ENCODE measurements at regions of chr6 and their contacts with region 1.

Region 1: DNA sequence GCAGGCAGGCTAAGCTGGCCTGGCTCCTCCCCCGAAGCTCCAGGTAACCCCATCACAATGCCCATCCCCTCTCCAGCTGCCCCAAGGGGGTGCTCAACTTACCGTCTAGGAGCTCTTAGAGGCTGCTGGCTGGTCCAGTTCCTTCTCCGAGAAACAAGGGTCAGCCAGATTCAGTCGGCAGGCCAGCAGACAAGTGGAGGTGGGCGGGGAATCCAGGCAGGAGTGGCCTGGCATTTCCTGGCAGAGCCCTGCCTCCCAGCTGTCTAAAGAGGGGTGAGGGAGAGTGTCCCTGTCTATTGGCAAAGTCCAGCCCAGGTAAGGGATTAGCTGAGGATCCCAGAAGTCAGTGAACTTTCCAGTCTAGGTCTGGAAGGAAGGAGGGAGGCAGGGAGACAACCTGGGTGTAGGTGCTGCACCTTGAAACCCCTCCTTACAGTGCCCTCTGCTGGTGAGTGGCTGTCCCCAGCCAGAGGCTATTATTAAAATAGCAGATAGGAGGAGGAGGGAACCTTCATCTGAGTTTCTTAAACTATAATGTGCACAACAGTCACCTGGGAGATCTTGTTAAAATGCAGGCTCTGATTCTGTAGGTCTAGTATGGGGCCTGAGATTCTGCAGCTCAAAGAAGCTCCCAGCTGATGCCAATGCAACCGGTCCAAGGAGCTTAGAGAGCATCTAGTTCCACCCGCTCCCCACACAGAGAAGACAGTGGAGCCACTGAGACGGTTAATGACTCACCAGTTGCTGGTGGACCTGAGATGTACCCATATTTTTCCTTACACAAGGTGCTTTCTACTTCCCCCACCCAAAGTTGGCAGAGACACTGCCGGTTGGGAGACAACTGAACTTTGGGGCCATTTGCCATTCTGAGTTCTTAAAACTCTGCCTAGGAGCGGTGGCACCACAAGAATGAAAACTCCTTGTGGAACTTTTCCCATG is at the start of gene UNC5CL:
- DNase-seq: peak; percentile 91
- H3K4me3 Mint-ChIP-seq: peak within 1 kb of the TSS; percentile 73
- H3K27ac Mint-ChIP-seq: peak within 1 kb of the TSS; percentile 90
- H3K4me1 Mint-ChIP-seq: peaks cover 58% of the 10 kb centered on the region
- H3K27me3 Mint-ChIP-seq: no peaks in the 10 kb centered on the region
- CTCF ChIP-seq: peak; percentile 76
- total RNA-seq, gene UNC5CL: 10.6 and 15.9 TPM in 2 replicates

Region 2: DNA sequence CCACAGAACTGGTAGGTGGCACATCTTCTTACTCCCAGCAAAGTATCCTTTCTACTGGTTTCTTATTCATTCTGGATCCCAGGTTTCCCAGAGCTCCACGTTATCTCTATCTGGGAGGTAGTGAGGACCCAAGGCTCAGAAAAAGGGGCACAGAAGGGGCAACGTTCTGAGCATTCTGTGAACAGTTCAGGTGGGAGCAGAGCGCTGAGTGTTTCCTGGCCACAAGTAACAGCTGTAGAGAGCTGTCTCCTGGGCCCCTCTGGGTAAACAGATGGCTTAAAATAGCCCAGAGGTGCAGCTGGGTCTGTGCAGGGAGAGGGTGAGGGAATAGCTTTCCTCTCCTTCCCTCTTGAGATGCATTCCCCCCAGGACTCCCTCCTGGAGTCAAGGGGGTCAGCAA is 15.8 kb after region 1 on chr6:
- CTCF ChIA-PET with region 1: interaction called, 16 read pairs
- intact Hi-C with region 1: no loop called
- DNase-seq: no peak
- H3K4me3 Mint-ChIP-seq: no peak overlapping the region
- H3K27ac Mint-ChIP-seq: no peak overlapping the region
- H3K4me1 Mint-ChIP-seq: peaks cover 20% of the 10 kb centered on the region
- H3K27me3 Mint-ChIP-seq: no peaks in the 10 kb centered on the region
- CTCF ChIP-seq: no peak

Region 3: DNA sequence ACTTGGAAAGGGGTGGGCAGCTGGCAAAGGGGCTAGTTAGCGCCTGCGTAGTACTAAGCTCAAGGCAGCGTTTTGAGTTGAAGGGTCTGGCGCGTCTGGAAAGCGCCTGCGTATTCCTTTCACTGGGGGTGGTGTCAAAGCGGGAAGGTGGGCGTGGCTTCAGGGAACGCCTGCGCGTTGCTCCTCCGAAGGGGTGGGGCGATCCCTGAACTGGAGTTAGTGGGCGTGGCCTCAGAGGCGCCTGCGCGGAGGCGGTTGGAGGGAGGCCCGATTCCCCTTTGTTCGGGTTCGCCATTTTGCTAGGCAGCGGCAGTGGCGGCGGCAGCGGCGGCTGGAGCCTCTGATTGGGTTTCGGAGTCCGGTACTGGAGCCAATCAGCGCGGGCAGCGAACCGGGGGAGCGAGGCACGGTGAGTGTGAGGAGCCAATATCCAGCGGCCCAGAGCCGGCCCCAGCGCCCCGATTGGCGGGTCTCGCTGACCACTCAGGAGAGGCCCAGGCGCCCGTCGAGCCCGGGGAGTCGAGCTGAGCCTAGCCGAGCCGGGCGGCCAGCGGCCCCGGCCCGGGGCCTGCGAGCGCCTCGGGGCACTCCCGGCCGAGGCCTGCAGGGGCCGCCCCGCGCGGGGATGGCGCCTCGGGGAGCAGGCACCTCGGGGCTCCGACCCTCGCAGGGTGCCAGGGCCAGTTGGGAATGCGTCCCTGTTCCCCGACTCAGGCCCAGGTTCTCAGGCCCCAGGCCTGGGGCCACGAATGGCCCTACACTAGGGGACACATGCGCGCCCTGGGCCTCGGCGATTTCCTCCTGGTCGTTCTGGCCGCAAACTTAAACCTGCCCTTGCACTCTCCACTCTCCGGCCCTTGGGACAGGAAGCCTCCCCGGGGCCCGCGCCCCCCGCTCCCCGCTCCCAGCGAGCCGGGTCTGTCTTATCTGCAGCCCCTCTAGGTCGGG is 33.6 kb after region 1 on chr6 and contains the start of gene NFYA:
- CTCF ChIA-PET with region 1: interaction called, 13 read pairs
- intact Hi-C with region 1: loop called (anchors 1 kb)
- DNase-seq: peak; percentile 100
- H3K4me3 Mint-ChIP-seq: peak within 1 kb of the TSS; percentile 83
- H3K27ac Mint-ChIP-seq: peak within 1 kb of the TSS; percentile 96
- H3K4me1 Mint-ChIP-seq: peaks cover 38% of the 10 kb centered on the region
- H3K27me3 Mint-ChIP-seq: no peaks in the 10 kb centered on the region
- CTCF ChIP-seq: peak; percentile 56
- total RNA-seq, gene NFYA: 22.9 and 23.7 TPM in 2 replicates

Measured in Calu3 (cell line).